ENCODE measurements at regions of chr12 and their contacts with region 1.

Region 1: DNA sequence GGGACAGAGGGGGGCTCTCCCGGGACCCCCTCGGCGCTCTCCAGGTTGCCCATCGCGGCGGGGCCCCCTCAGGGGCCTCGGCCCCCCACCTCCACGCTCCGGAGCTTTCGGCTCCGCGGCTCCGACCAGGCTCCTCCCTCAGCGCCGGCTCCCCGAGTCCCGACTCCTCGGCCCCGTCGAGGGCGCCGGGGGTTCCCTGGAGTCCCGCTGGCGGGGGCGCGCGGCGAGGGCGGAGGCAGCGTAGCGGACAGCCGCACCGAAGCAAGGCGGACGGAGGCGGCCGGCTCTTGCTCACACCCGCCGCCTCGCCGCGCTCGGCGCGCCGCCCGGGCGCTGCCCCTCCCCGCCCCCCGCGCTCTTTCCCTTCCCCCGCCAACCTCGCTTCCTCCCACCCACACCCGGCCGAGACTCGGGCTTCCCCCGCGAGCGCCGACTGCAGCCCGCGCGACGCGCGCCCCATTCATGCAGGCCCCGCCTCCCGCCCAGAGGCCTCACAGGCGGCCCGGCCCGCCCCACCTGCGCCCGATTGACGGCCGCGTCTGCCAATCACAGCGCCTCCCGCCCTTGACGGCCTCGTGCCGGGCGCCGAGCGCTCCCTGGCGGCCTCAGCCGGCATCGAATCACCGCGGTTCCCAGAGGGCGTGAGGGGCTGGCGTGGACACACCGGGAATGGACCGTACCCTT is at the start of gene FMNL3:
- DNase-seq: peak; percentile 99
- ATAC-seq: peak; percentile 92
- H3K4me3 Mint-ChIP-seq: peak within 1 kb of the TSS; percentile 92
- H3K27ac Mint-ChIP-seq: peak within 1 kb of the TSS; percentile 83
- H3K4me1 Mint-ChIP-seq: peaks cover 43% of the 10 kb centered on the region
- H3K27me3 Mint-ChIP-seq: peaks cover 5% of the 10 kb centered on the region
- total RNA-seq, gene FMNL3: 23.2 to 24.3 TPM

Region 2: GRCh38 chr12:49069507-49070346 is 637.5 kb before region 1 on chr12 and contains the start of gene RHEBL1:
- CTCF ChIA-PET with region 1: no interaction called
- POLR2A ChIA-PET with region 1: no interaction called
- intact Hi-C with region 1: loop called in 1 of 2 experiments (anchors 1 kb)
- DNase-seq: peak; percentile 100
- ATAC-seq: peak; percentile 100
- H3K4me3 Mint-ChIP-seq: peak within 1 kb of the TSS; percentile 94
- H3K27ac Mint-ChIP-seq: peak within 1 kb of the TSS; percentile 91
- H3K4me1 Mint-ChIP-seq: peaks cover 15% of the 10 kb centered on the region
- H3K27me3 Mint-ChIP-seq: no peaks in the 10 kb centered on the region
- total RNA-seq, gene RHEBL1: 6.7 to 13.3 TPM

Region 3: DNA sequence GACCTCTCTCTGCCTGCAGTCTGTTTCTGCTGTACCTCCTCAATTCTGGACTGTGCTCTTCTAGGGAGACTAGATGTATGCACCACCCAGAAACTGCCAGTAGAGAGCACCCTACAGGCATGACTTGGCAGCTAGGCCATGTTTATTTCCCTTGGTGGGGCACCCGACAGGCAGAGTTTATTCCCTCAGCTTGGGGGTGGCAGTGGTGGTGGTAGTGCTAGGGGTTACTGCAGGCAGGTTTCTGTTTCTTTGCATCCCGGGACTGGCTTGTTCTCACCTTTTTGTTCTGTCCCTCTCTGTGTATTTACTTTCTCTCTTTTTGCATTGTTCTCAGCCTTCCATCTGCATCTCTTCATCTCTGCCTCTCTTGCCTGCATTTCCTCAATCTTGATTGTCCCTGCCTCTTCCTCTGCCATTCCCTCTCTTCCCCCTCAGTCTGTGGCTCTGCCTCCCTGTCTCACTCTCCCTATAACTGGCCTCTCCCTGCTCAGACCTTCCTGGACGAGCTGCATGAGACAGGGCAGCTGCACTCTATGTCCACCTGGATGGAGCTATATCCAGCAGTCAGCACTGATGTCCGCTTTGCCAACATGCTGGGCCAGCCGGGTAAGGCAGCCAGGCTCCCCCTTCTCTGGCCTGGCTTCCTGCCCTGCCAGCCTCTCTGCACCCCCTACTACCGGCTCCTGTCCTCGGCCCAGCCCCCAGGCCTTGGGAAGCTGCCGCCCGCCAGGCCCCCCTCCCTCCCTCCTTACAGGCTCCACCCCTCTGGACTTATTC is 70.1 kb before region 1 on chr12:
- CTCF ChIA-PET with region 1: interaction called, 332 read pairs
- POLR2A ChIA-PET with region 1: interaction called, 5 read pairs
- intact Hi-C with region 1: loop called (anchors 1 to 2 kb)
- DNase-seq: peak; percentile 78
- ATAC-seq: peak; percentile 97
- H3K4me3 Mint-ChIP-seq: no peak overlapping the region
- H3K27ac Mint-ChIP-seq: peak overlapping the region; percentile 33
- H3K4me1 Mint-ChIP-seq: peaks cover 14% of the 10 kb centered on the region
- H3K27me3 Mint-ChIP-seq: no peaks in the 10 kb centered on the region

Region 4: GRCh38 chr12:49673446-49674317 is 33.6 kb before region 1 on chr12:
- CTCF ChIA-PET with region 1: interaction called, 22 read pairs
- POLR2A ChIA-PET with region 1: interaction called, 6 read pairs
- intact Hi-C with region 1: loop called in 1 of 2 experiments (anchors 2 kb)
- DNase-seq: peak; percentile 28
- ATAC-seq: peak; percentile 34
- H3K4me3 Mint-ChIP-seq: no peak overlapping the region
- H3K27ac Mint-ChIP-seq: peak overlapping the region; percentile 93
- H3K4me1 Mint-ChIP-seq: peaks cover 82% of the 10 kb centered on the region
- H3K27me3 Mint-ChIP-seq: no peaks in the 10 kb centered on the region

Region 5: DNA sequence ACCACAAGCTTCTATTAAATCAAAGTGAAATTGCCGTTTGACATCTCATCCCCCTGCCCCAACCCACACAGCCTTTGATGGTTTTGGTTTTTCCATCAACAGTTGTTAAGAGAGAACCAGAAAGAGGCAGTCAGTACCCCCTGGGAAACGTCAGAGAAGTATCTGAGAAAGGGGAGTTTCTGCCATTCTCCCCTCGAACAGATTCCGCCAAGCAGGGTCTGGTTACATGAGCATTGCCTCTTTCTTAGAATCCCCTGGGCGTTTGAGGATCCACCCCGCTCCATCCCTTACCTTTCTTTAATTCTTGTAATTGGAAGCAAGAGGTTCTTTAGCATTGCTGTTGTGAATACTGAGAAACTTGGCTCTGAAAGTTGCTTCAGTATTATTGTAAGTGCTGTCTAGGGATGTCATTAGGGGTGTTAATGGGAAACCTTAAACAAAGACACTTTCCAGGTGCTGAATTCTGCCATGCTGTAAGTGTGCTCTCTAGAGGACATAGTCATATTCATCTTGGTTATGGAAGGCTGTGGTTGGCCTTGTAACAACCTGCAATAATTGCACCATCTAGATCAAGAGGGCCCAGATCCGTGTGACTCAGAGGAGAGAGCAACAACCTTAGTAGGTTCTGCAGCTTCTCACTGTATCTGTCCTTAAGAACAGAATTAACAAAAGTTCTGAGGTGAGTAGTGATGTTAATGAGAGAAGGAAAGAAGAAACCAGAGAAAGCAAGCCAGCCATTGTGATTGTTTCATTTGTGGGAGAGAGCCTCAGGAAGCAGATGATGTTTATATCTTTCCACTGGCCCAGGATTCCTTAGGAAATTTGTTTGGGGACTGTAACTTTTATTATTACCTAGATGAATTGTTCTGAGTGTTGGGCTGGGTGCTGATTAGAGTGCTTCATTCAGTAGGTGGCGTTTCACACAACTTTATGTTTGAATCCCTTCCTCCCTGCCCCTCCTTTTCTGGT is 43.0 kb after region 1 on chr12:
- CTCF ChIA-PET with region 1: interaction called, 4 read pairs
- POLR2A ChIA-PET with region 1: interaction called, 5 read pairs
- intact Hi-C with region 1: loop called in 1 of 2 experiments (anchors 1 kb)
- DNase-seq: peak; percentile 81
- ATAC-seq: peak; percentile 87
- H3K4me3 Mint-ChIP-seq: peak overlapping the region; percentile 69
- H3K27ac Mint-ChIP-seq: peak overlapping the region; percentile 98
- H3K4me1 Mint-ChIP-seq: peaks cover 87% of the 10 kb centered on the region
- H3K27me3 Mint-ChIP-seq: no peaks in the 10 kb centered on the region

Region 6: GRCh38 chr12:49842519-49843352 is 135.5 kb after region 1 on chr12 and contains the start of gene BCDIN3D:
- CTCF ChIA-PET with region 1: interaction called, 6 read pairs
- POLR2A ChIA-PET with region 1: no interaction called
- intact Hi-C with region 1: loop called in 1 of 2 experiments (anchors 1 kb)
- DNase-seq: peak; percentile 97
- ATAC-seq: peak; percentile 92
- H3K4me3 Mint-ChIP-seq: peak within 1 kb of the TSS; percentile 90
- H3K27ac Mint-ChIP-seq: peak within 1 kb of the TSS; percentile 91
- H3K4me1 Mint-ChIP-seq: peaks cover 30% of the 10 kb centered on the region
- H3K27me3 Mint-ChIP-seq: no peaks in the 10 kb centered on the region
- total RNA-seq, gene BCDIN3D: 5.5 to 5.6 TPM

Measured in activated CD4-positive, alpha-beta T cell treated with anti-CD3 and anti-CD28 coated beads for 36 hours (primary cell).